ENCODE measurements at regions of chr11 and their contacts with region 1.

Region 1: GRCh38 chr11:114340311-114341131 is 44.3 kb downstream of the NNMT start:
- DNase-seq: peak; percentile 50
- ATAC-seq: peak; percentile 72
- H3K4me3 Mint-ChIP-seq: peak overlapping the region; percentile 43
- H3K27ac Mint-ChIP-seq: no peak overlapping the region
- H3K4me1 Mint-ChIP-seq: peaks cover 9% of the 10 kb centered on the region
- H3K27me3 Mint-ChIP-seq: peaks cover 4% of the 10 kb centered on the region

Region 2: GRCh38 chr11:114159802-114160632 is 180.5 kb before region 1 on chr11:
- CTCF ChIA-PET with region 1: no interaction called
- POLR2A ChIA-PET with region 1: no interaction called
- intact Hi-C with region 1: no loop called
- DNase-seq: peak; percentile 93
- ATAC-seq: peak; percentile 83
- H3K4me3 Mint-ChIP-seq: peak overlapping the region; percentile 49
- H3K27ac Mint-ChIP-seq: peak overlapping the region; percentile 76
- H3K4me1 Mint-ChIP-seq: peaks cover 70% of the 10 kb centered on the region
- H3K27me3 Mint-ChIP-seq: no peaks in the 10 kb centered on the region

Region 3: GRCh38 chr11:114598461-114598860 is 257.9 kb after region 1 on chr11:
- CTCF ChIA-PET with region 1: no interaction called
- POLR2A ChIA-PET with region 1: no interaction called
- intact Hi-C with region 1: loop called (anchors 10 kb)
- DNase-seq: no peak
- ATAC-seq: no peak
- H3K4me3 Mint-ChIP-seq: no peak overlapping the region
- H3K27ac Mint-ChIP-seq: no peak overlapping the region
- H3K4me1 Mint-ChIP-seq: no peaks in the 10 kb centered on the region
- H3K27me3 Mint-ChIP-seq: no peaks in the 10 kb centered on the region

Region 4: GRCh38 chr11:114606003-114606801 is 265.7 kb after region 1 on chr11:
- CTCF ChIA-PET with region 1: no interaction called
- POLR2A ChIA-PET with region 1: no interaction called
- intact Hi-C with region 1: loop called in 1 of 2 experiments (anchors 10 kb)
- DNase-seq: no peak
- ATAC-seq: no peak
- H3K4me3 Mint-ChIP-seq: no peak overlapping the region
- H3K27ac Mint-ChIP-seq: no peak overlapping the region
- H3K4me1 Mint-ChIP-seq: no peaks in the 10 kb centered on the region
- H3K27me3 Mint-ChIP-seq: no peaks in the 10 kb centered on the region

Region 5: DNA sequence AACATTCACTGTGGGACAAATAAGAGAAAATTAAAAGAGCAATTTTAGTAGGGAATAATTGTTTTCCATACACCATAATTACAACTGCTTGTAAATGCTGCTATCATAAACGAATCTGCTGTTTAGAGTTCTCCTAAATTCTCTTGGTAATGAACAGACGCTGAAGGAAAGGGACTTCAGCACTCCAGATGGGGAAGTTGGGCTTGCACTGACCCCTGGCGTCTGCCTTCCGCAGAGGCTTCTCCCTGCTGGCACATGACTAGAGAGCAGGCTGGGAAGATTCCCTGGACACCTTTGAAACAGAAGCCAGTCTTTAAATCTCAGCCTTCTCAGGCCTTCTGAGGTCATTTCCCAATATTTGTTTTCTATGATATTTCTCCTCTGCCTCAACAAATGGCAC is 421.9 kb after region 1 on chr11:
- CTCF ChIA-PET with region 1: no interaction called
- POLR2A ChIA-PET with region 1: no interaction called
- intact Hi-C with region 1: loop called (anchors 1 to 5 kb)
- DNase-seq: peak; percentile 52
- ATAC-seq: no peak
- H3K4me3 Mint-ChIP-seq: no peak overlapping the region
- H3K27ac Mint-ChIP-seq: no peak overlapping the region
- H3K4me1 Mint-ChIP-seq: no peaks in the 10 kb centered on the region
- H3K27me3 Mint-ChIP-seq: peaks cover 25% of the 10 kb centered on the region

Measured in activated CD4-positive, alpha-beta T cell treated with anti-CD3 and anti-CD28 coated beads for 36 hours (primary cell).